ENCODE measurements at regions of chr14 and their contacts with region 1.

Region 1: GRCh38 chr14:71932220-71932981 is at the start of gene RGS6:
- DNase-seq: no peak
- ATAC-seq: peak; percentile 85
- H3K4me3 ChIP-seq: peak within 1 kb of the TSS; percentile 58
- H3K27ac ChIP-seq: peak within 1 kb of the TSS; percentile 48
- H3K4me1 ChIP-seq: no peaks in the 10 kb centered on the region
- H3K27me3 ChIP-seq: peaks cover 0 to 6% of the 10 kb centered on the region in 2 experiments; a peak in 1 of 4 replicates
- CTCF ChIP-seq: peak; percentile 40 to 60 (median 47); a peak in 5 of 6 replicates
- EP300 ChIP-seq: no peak
- POLR2A ChIP-seq: peak; percentile 45; the same call in 1 of the 2 replicates
- RAD21 ChIP-seq: peak; percentile 76
- polyA plus RNA-seq, gene RGS6: 3.9 to 4.7 TPM

Region 2: GRCh38 chr14:71942904-71943694 is 10.7 kb after region 1 on chr14:
- CTCF ChIA-PET with region 1: interaction called, 8 read pairs
- POLR2A ChIA-PET with region 1: no interaction called
- RAD21 ChIA-PET with region 1: interaction called, 37 read pairs
- SMC1A ChIA-PET with region 1: interaction called, 19 read pairs
- in situ Hi-C with region 1: no loop called
- intact Hi-C with region 1: no loop called
- DNase-seq: peak; percentile 53
- ATAC-seq: peak; percentile 88
- H3K4me3 ChIP-seq: no peak overlapping the region; the same call in 1 of the 2 replicates
- H3K27ac ChIP-seq: peak overlapping the region; percentile 69
- H3K4me1 ChIP-seq: peaks cover 14% of the 10 kb centered on the region
- H3K27me3 ChIP-seq: no peaks in the 10 kb centered on the region
- CTCF ChIP-seq: no peak
- EP300 ChIP-seq: peak in 1 of 2 experiments; percentile 58; a peak in 2 of 4 replicates
- POLR2A ChIP-seq: no peak
- RAD21 ChIP-seq: no peak

Region 3: GRCh38 chr14:71988939-71989338 is 56.5 kb after region 1 on chr14:
- CTCF ChIA-PET with region 1: interaction called, 9 read pairs
- POLR2A ChIA-PET with region 1: interaction called, 3 read pairs
- RAD21 ChIA-PET with region 1: interaction called, 12 read pairs
- SMC1A ChIA-PET with region 1: interaction called, 26 read pairs
- in situ Hi-C with region 1: no loop called
- intact Hi-C with region 1: no loop called
- DNase-seq: no peak
- ATAC-seq: no peak
- H3K4me3 ChIP-seq: no peak overlapping the region
- H3K27ac ChIP-seq: no peak overlapping the region
- H3K4me1 ChIP-seq: no peaks in the 10 kb centered on the region
- H3K27me3 ChIP-seq: no peaks in the 10 kb centered on the region
- CTCF ChIP-seq: no peak
- EP300 ChIP-seq: no peak
- POLR2A ChIP-seq: no peak
- RAD21 ChIP-seq: no peak

Region 4: DNA sequence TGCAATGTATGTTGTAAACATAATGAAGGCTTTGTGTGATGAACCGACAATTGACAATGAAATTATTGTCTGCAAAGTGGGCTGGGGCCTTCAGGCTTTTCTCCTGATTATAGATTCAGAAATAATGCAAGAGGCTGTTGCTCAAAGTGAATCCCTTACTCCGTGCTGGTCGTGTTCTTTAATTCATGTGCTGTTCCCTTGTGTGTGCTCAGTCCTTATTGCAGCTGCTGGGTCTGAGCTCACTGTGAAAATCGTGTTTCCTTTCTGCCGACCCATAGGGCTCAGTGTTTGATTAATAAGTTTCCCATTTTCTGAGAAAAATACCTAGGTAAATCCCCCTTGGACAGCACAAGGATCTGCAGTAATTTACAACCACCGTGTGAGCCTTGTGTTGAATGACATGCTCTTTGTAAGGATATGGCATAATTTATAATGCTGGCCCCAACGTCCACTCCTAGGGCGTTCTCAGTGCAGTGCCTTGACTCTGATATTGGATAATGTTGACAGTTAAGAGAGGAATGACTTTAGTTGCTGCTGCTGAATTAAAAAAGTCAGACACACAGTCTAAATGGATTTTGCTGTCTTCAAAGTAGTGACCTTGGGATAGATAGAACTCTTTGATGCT is 81.4 kb after region 1 on chr14:
- CTCF ChIA-PET with region 1: interaction called, 5 read pairs
- POLR2A ChIA-PET with region 1: interaction called, 4 read pairs
- RAD21 ChIA-PET with region 1: interaction called, 17 read pairs
- SMC1A ChIA-PET with region 1: interaction called, 13 read pairs
- in situ Hi-C with region 1: no loop called
- intact Hi-C with region 1: no loop called
- DNase-seq: no peak
- ATAC-seq: peak; percentile 51
- H3K4me3 ChIP-seq: no peak overlapping the region
- H3K27ac ChIP-seq: no peak overlapping the region
- H3K4me1 ChIP-seq: no peaks in the 10 kb centered on the region
- H3K27me3 ChIP-seq: no peaks in the 10 kb centered on the region
- CTCF ChIP-seq: no peak
- EP300 ChIP-seq: no peak
- POLR2A ChIP-seq: no peak
- RAD21 ChIP-seq: no peak

Region 5: GRCh38 chr14:72040528-72040927 is 108.1 kb after region 1 on chr14:
- CTCF ChIA-PET with region 1: no interaction called
- POLR2A ChIA-PET with region 1: no interaction called
- RAD21 ChIA-PET with region 1: no interaction called
- SMC1A ChIA-PET with region 1: no interaction called
- in situ Hi-C with region 1: no loop called
- intact Hi-C with region 1: no loop called
- DNase-seq: no peak
- ATAC-seq: no peak
- H3K4me3 ChIP-seq: no peak overlapping the region
- H3K27ac ChIP-seq: no peak overlapping the region
- H3K4me1 ChIP-seq: no peaks in the 10 kb centered on the region
- H3K27me3 ChIP-seq: no peaks in the 10 kb centered on the region
- CTCF ChIP-seq: no peak
- EP300 ChIP-seq: no peak
- POLR2A ChIP-seq: no peak
- RAD21 ChIP-seq: no peak

Region 6: DNA sequence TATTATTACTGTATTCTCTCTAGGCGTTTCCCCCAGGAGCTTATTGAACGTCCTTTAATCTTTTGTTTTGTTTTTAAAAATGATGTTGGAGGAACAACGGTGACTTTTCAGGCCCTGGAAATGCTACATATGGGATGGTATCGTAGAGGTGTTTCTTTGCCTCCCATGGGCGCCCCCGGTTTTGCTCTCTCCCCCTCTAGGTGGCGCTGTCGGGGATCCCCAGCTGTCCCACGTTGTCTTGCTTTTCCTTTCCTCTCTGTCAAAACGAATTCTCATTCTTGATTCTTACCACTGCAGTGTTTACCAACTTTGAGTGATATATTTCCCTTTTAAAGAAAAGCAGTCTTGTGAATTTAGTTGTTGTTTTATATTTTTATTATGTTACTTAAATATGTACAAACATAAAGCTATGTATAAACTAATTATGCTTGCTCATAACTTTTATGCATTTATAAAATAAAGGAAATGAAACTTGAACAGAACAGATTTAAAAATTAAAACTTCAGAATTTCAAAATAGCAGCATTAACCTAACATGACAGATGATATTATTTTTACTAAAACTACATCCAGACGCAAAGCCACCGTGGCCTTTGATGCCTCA is 171.7 kb after region 1 on chr14:
- CTCF ChIA-PET with region 1: interaction called, 8 read pairs
- POLR2A ChIA-PET with region 1: interaction called, 3 read pairs
- RAD21 ChIA-PET with region 1: interaction called, 12 read pairs
- SMC1A ChIA-PET with region 1: interaction called, 4 read pairs
- in situ Hi-C with region 1: no loop called
- intact Hi-C with region 1: no loop called
- DNase-seq: no peak
- ATAC-seq: peak; percentile 75
- H3K4me3 ChIP-seq: no peak overlapping the region
- H3K27ac ChIP-seq: no peak overlapping the region
- H3K4me1 ChIP-seq: no peaks in the 10 kb centered on the region
- H3K27me3 ChIP-seq: no peaks in the 10 kb centered on the region
- CTCF ChIP-seq: peak; percentile 59 to 72 (median 66)
- EP300 ChIP-seq: no peak
- POLR2A ChIP-seq: no peak
- RAD21 ChIP-seq: peak; percentile 64

Region 7: GRCh38 chr14:72169521-72169920 is 237.1 kb after region 1 on chr14:
- CTCF ChIA-PET with region 1: interaction called, 10 read pairs
- POLR2A ChIA-PET with region 1: no interaction called
- RAD21 ChIA-PET with region 1: interaction called, 3 read pairs
- SMC1A ChIA-PET with region 1: interaction called, 12 read pairs
- in situ Hi-C with region 1: no loop called
- intact Hi-C with region 1: no loop called
- DNase-seq: no peak
- ATAC-seq: peak; percentile 49
- H3K4me3 ChIP-seq: no peak overlapping the region
- H3K27ac ChIP-seq: no peak overlapping the region
- H3K4me1 ChIP-seq: no peaks in the 10 kb centered on the region
- H3K27me3 ChIP-seq: no peaks in the 10 kb centered on the region
- CTCF ChIP-seq: no peak
- EP300 ChIP-seq: no peak
- POLR2A ChIP-seq: no peak
- RAD21 ChIP-seq: no peak